SK-N-SH (cell line): ENCODE measurements at regions of chr4 and their contacts with region 1.

Region 1: DNA sequence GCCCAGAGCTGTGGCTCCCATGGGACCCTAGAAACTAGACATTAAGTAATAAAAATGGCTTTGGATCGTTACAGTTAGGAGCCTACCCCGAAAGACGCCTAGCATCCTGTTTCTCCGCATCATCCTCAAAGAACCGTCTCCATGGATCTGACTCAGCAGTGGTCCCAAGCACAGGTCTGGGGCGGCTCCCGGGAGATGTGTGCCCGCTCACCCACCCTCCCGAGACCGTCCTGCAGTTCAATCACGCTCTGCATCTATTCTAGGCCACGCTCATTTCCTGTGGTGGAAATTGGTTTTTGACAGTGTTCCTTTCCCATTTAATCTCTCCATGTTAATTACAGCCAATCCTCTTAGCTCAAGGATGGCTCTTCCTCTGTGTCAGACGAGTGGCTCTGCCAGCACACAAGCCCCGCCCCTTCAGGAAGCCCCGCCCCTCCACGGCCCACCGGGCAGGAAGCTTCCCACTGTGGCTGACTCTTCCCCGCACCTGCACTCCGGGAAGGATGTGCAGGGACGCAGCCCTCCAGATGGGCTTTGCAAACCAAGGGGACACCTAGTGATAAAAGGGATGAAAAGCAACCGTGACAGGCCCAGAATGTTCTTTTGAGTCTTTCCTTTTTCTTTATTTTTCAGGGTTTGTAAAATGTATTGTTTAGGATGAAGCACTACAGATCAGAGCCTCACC is 34.5 kb upstream of the HELT start:
- DNase-seq: peak; percentile 95
- H3K4me3 ChIP-seq: peak overlapping the region in 1 of 2 experiments; percentile 35; a peak in 2 of 4 replicates
- H3K27ac ChIP-seq: peak overlapping the region in 1 of 2 experiments; percentile 67; a peak in 2 of 4 replicates
- H3K4me1 ChIP-seq: peaks cover 0 to 21% of the 10 kb centered on the region in 2 experiments; a peak in 2 of 4 replicates
- H3K27me3 ChIP-seq: no peaks in the 10 kb centered on the region; the same call in 1 of the 2 replicates
- CTCF ChIP-seq: peak; percentile 45
- EP300 ChIP-seq: no peak
- RAD21 ChIP-seq: peak; percentile 92

Region 2: GRCh38 chr4:184755278-184755677 is 228.5 kb before region 1 on chr4:
- CTCF ChIA-PET with region 1: interaction called, 10 read pairs
- POLR2A ChIA-PET with region 1: interaction called, 3 read pairs
- DNase-seq: no peak
- H3K4me3 ChIP-seq: no peak overlapping the region
- H3K27ac ChIP-seq: no peak overlapping the region; a peak in 1 of 4 replicates
- H3K4me1 ChIP-seq: no peaks in the 10 kb centered on the region; a peak in 1 of 4 replicates
- H3K27me3 ChIP-seq: no peaks in the 10 kb centered on the region
- CTCF ChIP-seq: no peak
- EP300 ChIP-seq: no peak; a peak in 1 of 4 replicates
- RAD21 ChIP-seq: no peak

Region 3: GRCh38 chr4:184960505-184961235 is 23.1 kb before region 1 on chr4:
- CTCF ChIA-PET with region 1: interaction called, 12 read pairs
- POLR2A ChIA-PET with region 1: no interaction called
- DNase-seq: no peak
- H3K4me3 ChIP-seq: no peak overlapping the region
- H3K27ac ChIP-seq: no peak overlapping the region
- H3K4me1 ChIP-seq: peaks cover 0 to 7% of the 10 kb centered on the region in 2 experiments; a peak in 1 of 4 replicates
- H3K27me3 ChIP-seq: 0 out of 2 replicates have a peak, but pooled peaks cover 5% of the 10 kb centered on the region
- CTCF ChIP-seq: no peak
- EP300 ChIP-seq: no peak
- RAD21 ChIP-seq: no peak

Region 4: GRCh38 chr4:185005216-185005819 is 21.5 kb after region 1 on chr4:
- CTCF ChIA-PET with region 1: interaction called, 16 read pairs
- POLR2A ChIA-PET with region 1: no interaction called
- DNase-seq: peak; percentile 89
- H3K4me3 ChIP-seq: peak overlapping the region; percentile 4 to 35; a peak in 2 of 4 replicates
- H3K27ac ChIP-seq: no peak overlapping the region
- H3K4me1 ChIP-seq: peaks cover 0 to 5% of the 10 kb centered on the region in 2 experiments; a peak in 1 of 4 replicates
- H3K27me3 ChIP-seq: peaks cover 10% of the 10 kb centered on the region; the same call in 1 of the 2 replicates
- CTCF ChIP-seq: peak; percentile 92
- EP300 ChIP-seq: no peak
- RAD21 ChIP-seq: peak; percentile 82